Activated CD4-positive, alpha-beta T cell treated with anti-CD3 and anti-CD28 coated beads, Interleukin-2, amount 10 ng/mL, durations not matched to agents 24 days and 14 days (primary cell): ENCODE measurements at regions of chr11 and their contacts with region 1.

Region 1: GRCh38 chr11:126194121-126194543 is 17.3 kb downstream of the RPUSD4 start:
- DNase-seq: peak; percentile 79
- H3K4me3 Mint-ChIP-seq: no peak overlapping the region
- H3K27ac Mint-ChIP-seq: no peak overlapping the region
- H3K4me1 Mint-ChIP-seq: no peaks in the 10 kb centered on the region
- H3K27me3 Mint-ChIP-seq: no peaks in the 10 kb centered on the region

Region 2: DNA sequence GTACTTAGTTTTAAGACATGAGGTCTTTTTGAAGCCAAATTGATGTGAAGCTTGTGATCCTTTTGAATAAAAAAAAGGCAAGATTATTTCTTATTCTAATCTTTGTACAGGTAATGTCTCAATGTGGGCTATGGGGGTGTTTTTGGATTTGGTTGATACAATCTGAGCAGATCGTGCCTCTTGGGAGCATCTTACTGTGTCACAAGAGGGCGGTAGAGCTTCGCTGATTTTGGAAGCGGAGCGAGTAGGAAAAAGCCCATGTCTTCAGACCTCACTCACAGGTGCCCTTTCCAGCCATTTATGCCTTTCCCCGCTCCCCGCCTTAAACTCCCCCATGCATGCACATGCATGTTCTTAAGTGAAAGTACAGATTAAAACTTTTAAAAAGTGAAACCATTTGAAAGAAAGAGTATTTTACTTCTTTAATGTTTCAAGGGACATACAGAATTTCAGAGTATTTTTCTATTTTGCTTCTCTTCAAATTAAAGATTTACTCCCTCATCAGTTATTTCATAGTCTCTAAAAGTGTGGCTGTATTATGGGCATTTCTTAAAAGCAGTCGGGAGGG is 271.0 kb before region 1 on chr11:
- intact Hi-C with region 1: loop called (anchors 1 kb)
- DNase-seq: peak; percentile 89
- H3K4me3 Mint-ChIP-seq: no peak overlapping the region
- H3K27ac Mint-ChIP-seq: no peak overlapping the region
- H3K4me1 Mint-ChIP-seq: no peaks in the 10 kb centered on the region
- H3K27me3 Mint-ChIP-seq: peaks cover 8% of the 10 kb centered on the region

Region 3: GRCh38 chr11:125941619-125942611 is 252.2 kb before region 1 on chr11:
- intact Hi-C with region 1: loop called (anchors 5 kb)
- DNase-seq: peak; percentile 83
- H3K4me3 Mint-ChIP-seq: no peak overlapping the region
- H3K27ac Mint-ChIP-seq: no peak overlapping the region
- H3K4me1 Mint-ChIP-seq: peaks cover 7% of the 10 kb centered on the region
- H3K27me3 Mint-ChIP-seq: no peaks in the 10 kb centered on the region

Region 4: GRCh38 chr11:126716456-126717083 is 522.4 kb after region 1 on chr11:
- intact Hi-C with region 1: no loop called
- DNase-seq: peak; percentile 72
- H3K4me3 Mint-ChIP-seq: no peak overlapping the region
- H3K27ac Mint-ChIP-seq: no peak overlapping the region
- H3K4me1 Mint-ChIP-seq: no peaks in the 10 kb centered on the region
- H3K27me3 Mint-ChIP-seq: peaks cover 7% of the 10 kb centered on the region